GM10248 (cell line): ENCODE measurements at regions of chr14 and their contacts with region 1.

Region 1: GRCh38 chr14:30874120-30874998 is at the start of gene COCH:
- DNase-seq: peak; percentile 86
- CTCF ChIP-seq: peak; percentile 51

Region 2: GRCh38 chr14:30849354-30849753 is 25.0 kb before region 1 on chr14:
- CTCF ChIA-PET with region 1: interaction called, 19 read pairs
- POLR2A ChIA-PET with region 1: no interaction called
- DNase-seq: peak; percentile 57
- CTCF ChIP-seq: no peak

Region 3: GRCh38 chr14:30855345-30856037 is 18.9 kb before region 1 on chr14:
- CTCF ChIA-PET with region 1: interaction called, 19 read pairs
- POLR2A ChIA-PET with region 1: no interaction called
- DNase-seq: peak; percentile 70
- CTCF ChIP-seq: no peak

Region 4: DNA sequence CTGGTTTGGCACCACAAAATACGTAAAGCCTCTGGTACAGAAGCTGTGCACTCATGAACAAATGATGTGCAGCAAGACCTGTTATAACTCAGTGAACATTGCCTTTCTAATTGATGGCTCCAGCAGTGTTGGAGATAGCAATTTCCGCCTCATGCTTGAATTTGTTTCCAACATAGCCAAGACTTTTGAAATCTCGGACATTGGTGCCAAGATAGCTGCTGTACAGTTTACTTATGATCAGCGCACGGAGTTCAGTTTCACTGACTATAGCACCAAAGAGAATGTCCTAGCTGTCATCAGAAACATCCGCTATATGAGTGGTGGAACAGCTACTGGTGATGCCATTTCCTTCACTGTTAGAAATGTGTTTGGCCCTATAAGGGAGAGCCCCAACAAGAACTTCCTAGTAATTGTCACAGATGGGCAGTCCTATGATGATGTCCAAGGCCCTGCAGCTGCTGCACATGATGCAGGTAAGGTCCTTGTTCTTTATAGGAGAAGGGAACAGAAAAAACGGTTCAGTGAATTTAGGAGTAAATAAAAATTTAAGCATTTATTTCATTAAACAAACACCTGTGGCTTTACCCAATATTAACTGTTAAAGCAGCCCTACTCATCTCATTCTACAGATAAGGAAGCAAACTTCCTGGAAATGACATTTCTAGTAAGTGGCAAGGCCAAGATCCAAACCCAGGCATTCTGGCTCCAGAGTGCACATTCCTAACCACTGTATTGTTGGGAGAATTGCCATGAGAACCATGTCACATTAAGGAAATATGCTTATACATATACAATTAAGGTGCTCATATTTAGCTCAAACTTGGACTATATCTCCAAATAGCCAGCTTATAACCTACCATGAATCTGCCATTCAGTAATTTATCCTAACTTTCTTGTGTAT is 11.7 kb after region 1 on chr14:
- CTCF ChIA-PET with region 1: interaction called, 11 read pairs
- POLR2A ChIA-PET with region 1: no interaction called
- DNase-seq: no peak
- CTCF ChIP-seq: no peak

Region 5: DNA sequence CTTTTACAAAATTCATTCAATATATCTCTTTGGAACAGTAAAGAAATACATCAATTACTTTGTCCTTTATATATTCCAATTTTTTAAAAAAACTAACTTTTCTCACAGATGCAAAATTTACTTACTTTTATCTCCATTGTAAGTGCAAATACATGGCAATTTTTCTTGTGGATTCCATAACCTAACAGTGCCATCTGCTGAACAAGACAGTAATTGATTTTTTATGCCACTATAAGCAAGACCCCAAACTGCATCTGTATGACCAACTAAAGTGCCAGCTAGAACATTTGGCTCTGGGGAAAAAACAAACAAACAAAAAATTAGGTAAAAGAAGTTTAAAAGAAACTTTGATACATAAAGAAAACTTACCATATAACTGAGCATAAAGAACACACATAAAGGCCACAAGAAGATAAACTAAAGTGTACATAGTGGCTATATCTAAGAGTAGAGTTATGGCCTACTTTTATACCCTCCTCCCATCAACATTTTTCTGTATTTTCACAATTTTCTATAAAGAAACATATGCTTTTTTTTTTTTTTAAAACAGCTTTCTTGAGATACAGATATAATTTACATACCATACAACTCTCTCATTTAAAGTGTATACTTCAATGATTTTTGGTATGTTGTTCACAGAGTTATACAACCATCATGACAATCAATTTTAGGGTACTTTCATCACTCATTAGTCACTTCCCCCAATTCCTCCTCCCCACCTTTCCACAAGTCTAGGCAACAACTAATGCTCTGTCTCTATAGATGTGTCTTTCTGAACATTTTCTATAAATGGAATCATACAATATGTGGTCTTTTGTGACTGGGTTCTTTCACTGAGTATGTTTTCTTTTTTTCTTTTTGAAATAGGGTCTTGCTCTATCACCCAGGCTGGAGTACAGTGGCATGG is 32.6 kb after region 1 on chr14:
- CTCF ChIA-PET with region 1: interaction called, 10 read pairs
- POLR2A ChIA-PET with region 1: no interaction called
- DNase-seq: no peak
- CTCF ChIP-seq: peak; percentile 46